H1 (cell line): ENCODE measurements at regions of chr9 and their contacts with region 1.

Region 1: GRCh38 chr9:134983074-134983473 is 65.4 kb upstream of the FCN1 start:
- DNase-seq: peak; percentile 64 to 80
- H3K4me3 ChIP-seq: no peak overlapping the region
- H3K27ac ChIP-seq: no peak overlapping the region
- H3K4me1 ChIP-seq: peaks cover 0 to 8% (median 6%) of the 10 kb centered on the region in 4 experiments; a peak in 6 of 7 replicates
- H3K27me3 ChIP-seq: no peaks in the 10 kb centered on the region
- CTCF ChIP-seq: peak; percentile 79 to 85 (median 81)
- EP300 ChIP-seq: no peak
- POLR2A ChIP-seq: no peak
- RAD21 ChIP-seq: peak; percentile 93 to 94

Region 2: GRCh38 chr9:134728801-134729495 is 254.1 kb before region 1 on chr9:
- CTCF ChIA-PET with region 1: no interaction called
- POLR2A ChIA-PET with region 1: no interaction called
- DNase-seq: no peak
- H3K4me3 ChIP-seq: no peak overlapping the region
- H3K27ac ChIP-seq: no peak overlapping the region
- H3K4me1 ChIP-seq: peaks cover 0 to 2% (median 0%) of the 10 kb centered on the region in 4 experiments; a peak in 1 of 7 replicates
- H3K27me3 ChIP-seq: no peaks in the 10 kb centered on the region
- CTCF ChIP-seq: no peak
- EP300 ChIP-seq: no peak
- POLR2A ChIP-seq: no peak
- RAD21 ChIP-seq: no peak

Region 3: DNA sequence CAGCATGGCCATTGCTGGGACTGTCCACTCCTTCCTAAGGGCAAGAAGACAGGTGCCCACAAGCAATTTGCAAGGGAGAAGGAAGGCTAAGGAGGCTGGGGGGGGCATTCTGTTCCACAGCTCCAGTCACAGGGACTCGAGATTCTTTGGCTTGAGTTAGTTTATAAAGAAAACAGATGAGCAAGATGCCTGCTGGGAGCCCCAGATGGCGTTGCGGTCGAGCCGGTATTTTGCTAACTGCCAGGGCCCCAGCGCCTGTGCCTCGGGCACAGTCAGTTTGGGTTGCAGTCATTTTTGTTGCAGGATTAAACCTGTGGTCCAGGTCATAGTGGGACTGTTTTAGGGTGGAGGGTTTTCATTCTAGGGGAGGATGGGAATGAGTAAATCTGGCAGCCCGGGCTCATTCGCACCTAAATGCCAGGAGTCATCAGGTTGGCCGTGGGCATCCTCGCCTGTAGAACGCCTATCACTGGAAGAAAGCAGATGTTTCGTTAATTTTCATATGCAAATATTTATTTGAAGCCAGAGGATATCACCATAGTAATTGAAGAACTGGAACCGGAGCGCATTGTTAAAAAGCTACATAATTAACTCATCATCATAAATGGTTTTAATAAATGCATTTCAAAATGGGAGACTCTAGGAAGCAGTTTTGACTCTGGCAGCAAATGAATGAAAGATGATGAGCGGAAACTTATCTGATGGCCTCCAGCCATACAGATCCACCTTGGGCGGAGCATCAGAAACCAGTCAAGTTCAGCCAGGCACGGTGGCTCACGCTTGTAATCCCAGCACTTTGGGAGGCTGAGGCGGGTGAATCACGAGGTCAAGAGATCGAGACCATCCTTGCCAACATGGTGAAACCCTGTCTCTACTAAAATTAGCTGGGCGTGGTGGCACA is 189.5 kb before region 1 on chr9:
- CTCF ChIA-PET with region 1: interaction called, 10 read pairs
- POLR2A ChIA-PET with region 1: interaction called, 3 read pairs
- DNase-seq: no peak
- H3K4me3 ChIP-seq: no peak overlapping the region
- H3K27ac ChIP-seq: no peak overlapping the region
- H3K4me1 ChIP-seq: no peaks in the 10 kb centered on the region; a peak in 1 of 7 replicates
- H3K27me3 ChIP-seq: no peaks in the 10 kb centered on the region; a peak in 1 of 7 replicates
- CTCF ChIP-seq: no peak
- EP300 ChIP-seq: no peak
- POLR2A ChIP-seq: no peak
- RAD21 ChIP-seq: no peak

Region 4: DNA sequence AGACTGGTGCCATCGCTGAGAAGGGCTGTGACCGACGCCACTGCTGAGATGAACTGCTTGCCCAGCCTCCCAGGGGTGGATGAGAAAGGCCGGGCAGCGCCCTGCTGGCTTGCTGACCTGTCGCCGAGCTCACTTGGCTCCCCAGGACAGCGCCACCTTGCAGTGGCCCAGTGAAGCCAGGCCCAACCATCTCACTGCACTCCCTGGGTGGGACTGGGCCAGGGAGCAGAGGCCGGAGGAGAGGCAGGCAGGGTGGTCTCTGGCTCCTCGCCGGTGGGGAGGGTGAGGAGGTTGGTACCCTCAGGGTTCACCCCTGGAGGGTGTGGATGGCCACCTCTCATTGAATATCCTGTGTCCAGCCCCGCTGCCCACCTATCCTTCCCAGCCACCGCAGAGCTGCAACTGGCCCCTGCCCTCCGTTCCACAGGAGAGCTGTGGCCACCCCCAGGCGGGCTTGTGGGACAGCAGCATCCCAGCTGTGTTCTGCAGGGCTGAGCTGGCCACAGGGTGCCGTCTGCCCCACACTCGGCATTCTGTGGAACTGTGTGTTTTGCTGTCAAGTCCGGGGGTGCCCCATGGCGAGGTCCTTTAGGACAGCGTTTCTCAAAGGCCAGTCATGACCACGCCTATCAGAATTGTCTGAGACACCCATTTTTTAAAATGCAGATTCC is 143.5 kb before region 1 on chr9:
- CTCF ChIA-PET with region 1: interaction called, 16 read pairs
- POLR2A ChIA-PET with region 1: no interaction called
- DNase-seq: peak in 1 of 2 experiments; percentile 59
- H3K4me3 ChIP-seq: no peak overlapping the region
- H3K27ac ChIP-seq: no peak overlapping the region
- H3K4me1 ChIP-seq: no peaks in the 10 kb centered on the region
- H3K27me3 ChIP-seq: no peaks in the 10 kb centered on the region
- CTCF ChIP-seq: peak; percentile 65 to 80 (median 71)
- EP300 ChIP-seq: no peak
- POLR2A ChIP-seq: no peak
- RAD21 ChIP-seq: peak; percentile 31 to 55; a peak in 3 of 4 replicates

Region 5: DNA sequence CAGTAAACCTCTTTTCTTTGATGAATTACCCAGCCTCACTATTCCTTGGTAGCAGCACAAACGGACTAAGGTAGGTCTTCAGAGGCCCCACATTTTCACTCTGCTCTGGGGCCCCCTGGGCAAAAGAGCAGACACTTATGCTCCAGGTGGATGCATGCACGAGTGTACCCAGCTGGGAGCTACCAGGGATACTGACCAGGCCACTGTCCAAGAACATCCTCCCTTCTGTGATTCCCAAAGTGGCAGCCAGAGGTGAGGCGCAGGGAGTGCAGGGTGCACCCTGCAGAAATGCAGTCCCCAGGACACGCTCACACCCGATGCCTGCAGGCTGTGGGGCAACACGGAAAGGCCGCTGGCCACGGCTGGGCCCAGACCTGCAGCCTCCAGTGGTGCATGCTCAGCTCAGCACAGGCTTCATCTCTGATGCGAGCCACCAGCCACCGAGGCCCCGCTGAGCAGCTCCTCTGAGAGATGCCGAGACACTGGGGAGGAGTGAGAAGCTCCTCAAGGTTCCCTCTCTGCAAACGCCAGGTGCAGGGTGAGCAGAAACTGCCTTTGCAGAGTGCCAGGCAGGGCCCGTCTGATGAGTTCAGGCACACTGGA is 56.3 kb after region 1 on chr9:
- CTCF ChIA-PET with region 1: no interaction called
- POLR2A ChIA-PET with region 1: no interaction called
- DNase-seq: no peak
- H3K4me3 ChIP-seq: no peak overlapping the region
- H3K27ac ChIP-seq: no peak overlapping the region
- H3K4me1 ChIP-seq: peaks cover 0 to 3% (median 0%) of the 10 kb centered on the region in 4 experiments; a peak in 1 of 7 replicates
- H3K27me3 ChIP-seq: no peaks in the 10 kb centered on the region
- CTCF ChIP-seq: no peak
- EP300 ChIP-seq: no peak
- POLR2A ChIP-seq: no peak
- RAD21 ChIP-seq: no peak